ENCODE measurements at regions of chr19 and their contacts with region 1.

Region 1: DNA sequence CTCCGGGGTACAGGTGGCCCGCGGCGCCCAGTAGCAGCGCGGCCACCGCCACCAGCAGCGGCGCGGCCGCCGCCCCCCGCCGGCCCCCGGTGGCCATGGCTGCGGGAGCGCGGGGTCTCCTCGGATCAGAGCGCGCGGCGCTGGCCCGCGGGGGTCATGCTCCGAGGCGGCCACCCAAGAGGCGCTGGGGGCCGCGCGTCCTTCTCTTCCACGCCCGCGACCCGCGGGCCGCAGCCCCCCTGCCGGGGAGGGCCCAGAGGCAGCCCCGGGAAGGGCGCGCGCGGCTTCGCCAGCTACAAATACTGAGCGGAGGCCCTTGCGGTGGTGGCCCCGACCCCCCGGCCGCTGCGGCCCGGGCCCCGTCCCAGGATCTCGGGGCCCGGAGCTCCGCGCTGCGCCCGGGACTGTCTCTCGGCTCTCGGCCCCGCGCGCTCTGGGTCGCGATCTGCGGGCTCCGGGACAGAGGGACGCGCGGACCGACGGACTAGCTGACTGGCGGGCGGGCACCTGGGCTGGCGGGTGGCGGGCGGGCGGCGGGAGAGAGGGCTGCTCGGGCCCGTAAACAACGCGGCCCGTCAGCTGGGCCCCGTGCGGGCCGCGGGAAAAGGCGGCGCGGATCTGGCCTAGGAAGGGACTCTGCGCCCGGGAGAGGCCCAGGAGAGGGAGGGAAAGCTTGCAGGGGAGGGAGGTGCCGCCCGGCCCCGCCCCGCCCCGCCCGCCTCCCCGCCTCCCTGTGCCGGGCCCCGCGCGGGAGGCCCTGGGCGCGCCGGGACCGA is at the start of gene INSR:
- DNase-seq: peak; percentile 93
- H3K4me3 ChIP-seq: peak within 1 kb of the TSS; percentile 97
- H3K27ac ChIP-seq: peak within 1 kb of the TSS; percentile 87
- H3K4me1 ChIP-seq: no peaks in the 10 kb centered on the region
- H3K27me3 ChIP-seq: peaks cover 21% of the 10 kb centered on the region
- CTCF ChIP-seq: no peak
- total RNA-seq, gene INSR: 12.9 and 15.5 TPM in 2 replicates

Region 2: DNA sequence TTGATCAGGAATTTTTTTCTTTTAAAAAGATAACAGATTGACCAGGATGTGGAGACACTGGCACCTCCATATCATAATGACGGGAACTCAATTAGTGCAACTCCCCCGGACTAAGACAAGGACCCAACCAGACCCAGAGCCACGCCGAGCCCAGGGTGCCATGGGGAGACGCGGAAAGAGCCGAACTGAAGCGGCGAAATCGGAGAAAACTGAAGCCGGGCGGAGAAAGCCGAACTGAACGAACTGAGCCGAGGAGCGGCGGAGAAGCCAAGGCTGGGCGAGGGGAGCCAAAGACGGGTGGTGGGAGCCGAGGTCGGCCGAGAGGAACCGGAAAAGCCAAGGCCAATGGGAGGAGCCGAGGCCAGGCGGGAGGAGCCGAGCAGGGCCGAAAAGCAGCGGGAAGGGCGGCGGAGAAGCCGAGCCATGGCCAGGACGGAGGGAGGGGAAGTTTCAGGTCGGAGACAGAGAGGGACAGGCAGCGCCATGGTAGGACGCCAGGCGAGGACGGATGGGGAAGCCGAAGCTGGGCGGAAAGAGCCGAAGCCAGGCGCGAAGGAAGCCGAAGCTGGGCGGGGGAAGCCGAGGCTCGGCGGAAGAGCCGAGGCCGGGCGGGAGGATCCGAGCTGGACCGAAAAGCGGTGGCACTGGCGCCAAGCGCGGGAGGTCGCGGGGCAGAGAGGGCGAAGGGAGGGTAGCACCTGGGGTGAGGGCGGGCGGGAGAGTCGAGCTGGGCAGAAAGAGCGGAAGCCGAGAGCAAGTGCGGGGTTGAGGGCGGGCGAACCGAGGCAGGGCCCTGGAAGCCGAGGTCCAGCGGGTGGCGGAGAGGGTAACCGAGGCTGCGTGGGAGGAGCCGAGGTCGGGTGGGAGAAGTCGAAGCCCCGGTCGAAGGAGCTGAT is 195.0 kb before region 1 on chr19:
- CTCF ChIA-PET with region 1: interaction called, 3 read pairs
- POLR2A ChIA-PET with region 1: interaction called, 11 read pairs
- intact Hi-C with region 1: no loop called
- DNase-seq: peak; percentile 92
- H3K4me3 ChIP-seq: peak overlapping the region; percentile 58
- H3K27ac ChIP-seq: peak overlapping the region; percentile 81
- H3K4me1 ChIP-seq: peaks cover 3% of the 10 kb centered on the region
- H3K27me3 ChIP-seq: no peaks in the 10 kb centered on the region
- CTCF ChIP-seq: no peak

Region 3: DNA sequence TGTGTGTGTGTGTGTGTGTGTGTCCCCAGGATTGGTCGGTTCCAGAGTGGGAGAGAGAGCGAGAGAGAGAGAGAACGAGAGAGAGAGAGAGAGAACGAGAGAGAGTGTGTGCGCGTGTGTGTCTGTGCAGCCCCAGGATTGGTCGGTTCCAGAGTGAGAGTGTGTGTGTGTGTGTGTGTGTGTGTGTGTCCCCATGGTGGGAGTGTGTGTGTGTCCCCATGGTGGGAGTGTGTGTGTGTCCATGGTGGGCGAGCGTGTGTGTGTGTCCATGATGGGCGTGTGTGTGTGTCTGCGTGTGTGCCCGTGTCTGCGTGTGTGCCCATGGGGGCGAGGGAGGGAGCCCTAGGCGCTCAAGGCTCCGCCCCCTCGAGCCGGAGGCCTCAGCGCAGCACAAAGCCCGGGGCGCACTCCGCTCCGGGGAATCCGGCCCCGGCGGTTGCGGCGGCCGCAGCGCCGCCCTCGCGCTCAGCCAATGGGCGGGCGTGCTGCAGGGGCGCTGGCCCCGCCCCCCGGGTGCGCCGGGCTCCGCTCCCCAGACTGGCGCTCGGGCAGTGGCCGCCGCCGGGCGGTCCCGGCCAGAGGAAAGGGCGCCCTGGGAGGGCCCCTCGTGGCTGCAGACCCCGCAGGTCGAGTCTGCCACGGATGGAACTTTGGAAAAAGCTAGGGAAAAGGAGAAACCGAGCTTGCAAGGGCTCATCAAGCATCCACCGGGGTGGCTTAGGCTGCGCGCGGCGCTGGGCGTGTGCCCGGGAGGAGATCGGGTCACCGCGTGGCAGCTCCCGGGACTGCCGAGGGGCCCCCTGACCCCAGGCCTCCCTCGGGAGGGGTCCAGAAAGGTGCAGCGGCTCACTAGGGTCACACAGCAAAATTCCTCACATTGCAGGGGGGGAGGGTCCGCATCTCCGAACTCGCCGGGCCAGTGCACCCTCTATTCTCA is 96.0 kb before region 1 on chr19:
- CTCF ChIA-PET with region 1: interaction called, 3 read pairs
- POLR2A ChIA-PET with region 1: no interaction called
- intact Hi-C with region 1: loop called (anchors 1 kb)
- DNase-seq: peak; percentile 97
- H3K4me3 ChIP-seq: peak overlapping the region; percentile 67
- H3K27ac ChIP-seq: peak overlapping the region; percentile 84
- H3K4me1 ChIP-seq: peaks cover 9% of the 10 kb centered on the region
- H3K27me3 ChIP-seq: no peaks in the 10 kb centered on the region
- CTCF ChIP-seq: no peak

Region 4: GRCh38 chr19:7789447-7789846 is 495.5 kb after region 1 on chr19:
- CTCF ChIA-PET with region 1: no interaction called
- POLR2A ChIA-PET with region 1: no interaction called
- intact Hi-C with region 1: no loop called
- DNase-seq: no peak
- H3K4me3 ChIP-seq: no peak overlapping the region
- H3K27ac ChIP-seq: no peak overlapping the region
- H3K4me1 ChIP-seq: no peaks in the 10 kb centered on the region
- H3K27me3 ChIP-seq: peaks cover 31% of the 10 kb centered on the region
- CTCF ChIP-seq: no peak